ENCODE measurements at regions of chr15 and their contacts with region 1.

Region 1: GRCh38 chr15:75367913-75368688 is at the start of gene MAN2C1:
- DNase-seq: peak; percentile 94
- ATAC-seq: peak; percentile 96 to 98 (median 97)
- H3K4me3 ChIP-seq: peak within 1 kb of the TSS; percentile 80 to 100 (median 91)
- H3K27ac ChIP-seq: peak within 1 kb of the TSS; percentile 82 to 100 (median 98)
- H3K4me1 ChIP-seq: peaks cover 5 to 25% (median 22%) of the 10 kb centered on the region in 9 donors
- H3K27me3 ChIP-seq: no peaks in the 10 kb centered on the region
- CTCF ChIP-seq: peak; percentile 51 to 93 (median 72)
- total RNA-seq, gene MAN2C1: 90.4 to 128 (median 108) TPM

Region 2: DNA sequence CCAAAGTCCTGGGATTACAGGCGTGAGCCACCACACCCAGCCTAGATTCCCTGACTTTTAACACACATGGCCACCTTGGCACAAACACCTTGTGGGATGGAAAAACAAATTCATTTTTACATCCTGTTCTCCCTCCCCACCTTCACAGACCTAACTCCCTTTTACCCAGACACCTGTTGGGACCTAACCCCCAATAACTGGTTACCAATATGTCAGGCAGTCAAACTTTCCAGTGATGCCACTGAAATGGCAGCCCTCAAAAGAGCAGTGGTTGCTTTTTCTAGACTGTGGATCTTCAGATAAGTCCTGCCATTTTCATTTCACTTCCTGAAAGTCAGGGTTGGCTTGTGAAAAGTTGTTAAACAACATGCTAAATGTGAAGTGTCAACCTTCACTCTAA is 48.5 kb after region 1 on chr15:
- intact Hi-C with region 1: no loop called
- DNase-seq: no peak
- ATAC-seq: no peak
- H3K4me3 ChIP-seq: no peak overlapping the region
- H3K27ac ChIP-seq: no peak overlapping the region
- H3K4me1 ChIP-seq: no peaks in the 10 kb centered on the region
- H3K27me3 ChIP-seq: no peaks in the 10 kb centered on the region
- CTCF ChIP-seq: no peak

Region 3: GRCh38 chr15:75453703-75454470 is 85.8 kb after region 1 on chr15:
- intact Hi-C with region 1: loop called in 4 of 10 experiments (anchors 5 kb)
- DNase-seq: peak; percentile 97 to 98
- ATAC-seq: peak; percentile 61 to 79 (median 73)
- H3K4me3 ChIP-seq: peak overlapping the region; percentile 61 to 99 (median 94)
- H3K27ac ChIP-seq: peak overlapping the region; percentile 90 to 99 (median 98)
- H3K4me1 ChIP-seq: peaks cover 0 to 41% (median 31%) of the 10 kb centered on the region in 9 donors
- H3K27me3 ChIP-seq: no peaks in the 10 kb centered on the region
- CTCF ChIP-seq: peak in 1 of 9 donors; percentile 29

Region 4: DNA sequence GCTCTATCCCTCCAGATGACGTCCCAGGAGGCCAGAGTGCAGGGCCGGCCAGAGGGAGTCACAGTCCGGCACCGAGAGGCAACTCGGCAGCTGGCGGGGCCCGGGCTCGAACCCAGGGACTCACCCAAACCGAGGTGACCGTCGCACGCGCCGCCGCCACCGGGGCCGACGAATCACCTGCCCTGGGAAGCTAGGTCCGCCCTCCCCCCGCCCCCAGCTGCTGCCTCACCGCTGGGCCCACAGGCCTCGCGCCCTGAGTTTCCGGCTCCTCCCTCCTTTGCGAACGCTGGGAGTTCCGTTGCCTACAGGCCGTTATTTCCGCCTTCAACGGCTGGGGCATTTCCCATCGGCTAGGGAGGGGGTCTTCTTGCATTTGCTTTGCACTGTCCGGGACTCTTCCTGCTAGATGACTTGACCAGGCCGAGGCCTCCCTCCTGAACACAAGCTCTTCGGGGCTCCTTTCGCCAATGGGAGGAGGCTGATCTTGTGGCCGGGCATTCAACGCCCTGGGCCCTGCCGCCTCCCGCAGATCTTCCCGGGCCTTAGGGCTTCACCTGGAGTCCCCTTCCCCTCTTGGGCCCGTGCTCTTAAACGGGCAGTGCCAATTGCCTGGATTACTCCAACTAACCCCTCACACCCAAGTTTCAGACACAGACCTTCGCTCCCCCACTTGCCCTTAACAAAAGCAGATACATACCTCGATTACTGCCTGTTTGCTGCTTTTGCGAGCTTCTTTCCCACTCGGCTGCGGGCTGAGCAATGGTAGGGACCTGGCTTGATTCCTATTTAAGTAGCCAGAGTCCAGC is 257.6 kb after region 1 on chr15 and contains the start of gene SNUPN:
- intact Hi-C with region 1: loop called in 3 of 10 experiments (anchors 5 to 10 kb)
- DNase-seq: peak; percentile 95 to 96
- ATAC-seq: peak; percentile 93 to 96 (median 95)
- H3K4me3 ChIP-seq: peak within 1 kb of the TSS; percentile 75 to 98 (median 88)
- H3K27ac ChIP-seq: peak within 1 kb of the TSS; percentile 76 to 100 (median 98)
- H3K4me1 ChIP-seq: peaks cover 0 to 30% (median 18%) of the 10 kb centered on the region in 9 donors
- H3K27me3 ChIP-seq: no peaks in the 10 kb centered on the region
- CTCF ChIP-seq: no peak
- total RNA-seq, gene SNUPN: 12.9 to 18.2 (median 16.1) TPM

Region 5: GRCh38 chr15:75801859-75802593 is 433.9 kb after region 1 on chr15:
- intact Hi-C with region 1: loop called in 1 of 10 experiments (anchors 5 kb)
- DNase-seq: peak; percentile 78 to 83
- ATAC-seq: peak; percentile 95 to 99 (median 97)
- H3K4me3 ChIP-seq: peak overlapping the region in 8 of 10 donors; percentile 11 to 38 (median 28)
- H3K27ac ChIP-seq: no peak overlapping the region
- H3K4me1 ChIP-seq: peaks cover 0 to 17% (median 5%) of the 10 kb centered on the region in 9 donors
- H3K27me3 ChIP-seq: peaks cover 0 to 42% (median 25%) of the 10 kb centered on the region in 7 donors
- CTCF ChIP-seq: peak; percentile 82 to 98 (median 93)

Measured in heart right ventricle (tissue), 16 donors.